ENCODE measurements at regions of chr1 and their contacts with region 1.

Region 1: DNA sequence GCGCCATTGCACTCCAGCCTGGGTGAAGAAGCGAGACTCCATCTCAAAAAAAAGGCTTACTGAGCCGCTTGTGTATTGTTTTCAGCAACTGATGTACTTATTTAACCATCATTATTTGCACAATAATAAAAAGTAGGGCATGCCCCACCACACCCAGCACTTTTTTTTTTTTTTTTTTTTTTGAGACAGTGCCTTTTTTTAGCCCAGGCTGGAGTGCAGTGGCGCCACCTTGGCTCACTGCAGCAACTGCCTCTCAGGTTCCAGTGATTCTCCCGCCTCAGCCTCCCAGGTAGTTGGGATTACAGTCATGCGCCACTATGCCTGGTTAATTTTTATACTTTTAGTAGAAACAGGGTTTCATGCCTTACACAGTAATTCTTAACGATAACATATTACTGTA is 12.2 kb upstream of the TRNAU1AP start:
- DNase-seq: no peak
- H3K4me3 ChIP-seq: no peak overlapping the region
- H3K27ac ChIP-seq: no peak overlapping the region
- H3K4me1 ChIP-seq: no peaks in the 10 kb centered on the region
- H3K27me3 ChIP-seq: no peaks in the 10 kb centered on the region; a peak in 1 of 7 replicates
- CTCF ChIP-seq: peak; percentile 20 to 36 (median 30); a peak in 3 of 4 replicates
- EP300 ChIP-seq: no peak
- POLR2A ChIP-seq: no peak
- RAD21 ChIP-seq: peak in 1 of 2 experiments; percentile 23; a peak in 1 of 4 replicates

Region 2: GRCh38 chr1:28526889-28527288 is 13.8 kb before region 1 on chr1:
- CTCF ChIA-PET with region 1: interaction called, 4 read pairs
- POLR2A ChIA-PET with region 1: interaction called, 12 read pairs
- DNase-seq: no peak
- H3K4me3 ChIP-seq: no peak overlapping the region
- H3K27ac ChIP-seq: no peak overlapping the region
- H3K4me1 ChIP-seq: peaks cover 0 to under 1% (median 0%) of the 10 kb centered on the region in 4 experiments; a peak in 2 of 7 replicates
- H3K27me3 ChIP-seq: no peaks in the 10 kb centered on the region
- CTCF ChIP-seq: no peak
- EP300 ChIP-seq: no peak
- POLR2A ChIP-seq: no peak
- RAD21 ChIP-seq: no peak

Region 3: GRCh38 chr1:28552758-28553663 is 12.4 kb after region 1 on chr1 and contains the start of gene TRNAU1AP:
- CTCF ChIA-PET with region 1: interaction called, 8 read pairs
- POLR2A ChIA-PET with region 1: interaction called, 26 read pairs
- DNase-seq: peak; percentile 82 to 98
- H3K4me3 ChIP-seq: peak within 1 kb of the TSS; percentile 72 to 96 (median 90)
- H3K27ac ChIP-seq: peak within 1 kb of the TSS; percentile 49
- H3K4me1 ChIP-seq: no peaks in the 10 kb centered on the region
- H3K27me3 ChIP-seq: no peaks in the 10 kb centered on the region
- CTCF ChIP-seq: no peak
- EP300 ChIP-seq: peak in 1 of 2 experiments; percentile 65; a peak in 1 of 3 replicates
- POLR2A ChIP-seq: no peak; a peak in 1 of 3 replicates
- RAD21 ChIP-seq: peak; percentile 2 to 18; a peak in 1 of 4 replicates
- total RNA-seq, gene TRNAU1AP: 30.8 and 35.2 TPM in 2 replicates